CD4-positive, alpha-beta memory T cell (primary cell): ENCODE measurements at regions of chr1 and their contacts with region 1.

Region 1: GRCh38 chr1:202713110-202713509 is 2.9 kb upstream of the SYT2 start:
- DNase-seq: no peak
- H3K4me3 ChIP-seq: no peak overlapping the region
- H3K4me3 Mint-ChIP-seq: no peak overlapping the region
- H3K27ac ChIP-seq: no peak overlapping the region
- H3K27ac Mint-ChIP-seq: peak overlapping the region in 1 of 7 donors; percentile 12
- H3K4me1 ChIP-seq: no peaks in the 10 kb centered on the region
- H3K4me1 Mint-ChIP-seq: peaks cover 0 to 5% (median 0%) of the 10 kb centered on the region in 4 donors
- H3K27me3 ChIP-seq: peaks cover 27% of the 10 kb centered on the region
- H3K27me3 Mint-ChIP-seq: peaks cover 32 to 37% of the 10 kb centered on the region in 2 donors

Region 2: GRCh38 chr1:202184750-202185460 is 528.2 kb before region 1 on chr1:
- CTCF ChIA-PET with region 1: interaction called, 25 read pairs
- POLR2A ChIA-PET with region 1: no interaction called
- intact Hi-C with region 1: no loop called
- DNase-seq: peak; percentile 43 to 56 (median 50)
- H3K4me3 ChIP-seq: no peak overlapping the region
- H3K4me3 Mint-ChIP-seq: no peak overlapping the region
- H3K27ac ChIP-seq: no peak overlapping the region
- H3K27ac Mint-ChIP-seq: peak overlapping the region in 1 of 7 donors; percentile 29
- H3K4me1 ChIP-seq: peaks cover 5% of the 10 kb centered on the region
- H3K4me1 Mint-ChIP-seq: peaks cover 9 to 16% (median 13%) of the 10 kb centered on the region in 4 donors
- H3K27me3 ChIP-seq: no peaks in the 10 kb centered on the region
- H3K27me3 Mint-ChIP-seq: peaks cover 4 to 6% of the 10 kb centered on the region in 2 donors

Region 3: GRCh38 chr1:202462342-202463076 is 250.6 kb before region 1 on chr1:
- CTCF ChIA-PET with region 1: interaction called, 31 read pairs
- POLR2A ChIA-PET with region 1: no interaction called
- intact Hi-C with region 1: no loop called
- DNase-seq: no peak
- H3K4me3 ChIP-seq: no peak overlapping the region
- H3K4me3 Mint-ChIP-seq: no peak overlapping the region
- H3K27ac ChIP-seq: no peak overlapping the region
- H3K27ac Mint-ChIP-seq: peak overlapping the region in 3 of 7 donors; percentile 13 to 68 (median 14)
- H3K4me1 ChIP-seq: no peaks in the 10 kb centered on the region
- H3K4me1 Mint-ChIP-seq: no peaks in the 10 kb centered on the region
- H3K27me3 ChIP-seq: no peaks in the 10 kb centered on the region
- H3K27me3 Mint-ChIP-seq: no peaks in the 10 kb centered on the region

Region 4: GRCh38 chr1:202516434-202516877 is 196.7 kb before region 1 on chr1:
- CTCF ChIA-PET with region 1: no interaction called
- POLR2A ChIA-PET with region 1: no interaction called
- intact Hi-C with region 1: no loop called
- DNase-seq: no peak
- H3K4me3 ChIP-seq: no peak overlapping the region
- H3K4me3 Mint-ChIP-seq: no peak overlapping the region
- H3K27ac ChIP-seq: no peak overlapping the region
- H3K27ac Mint-ChIP-seq: no peak overlapping the region
- H3K4me1 ChIP-seq: no peaks in the 10 kb centered on the region
- H3K4me1 Mint-ChIP-seq: no peaks in the 10 kb centered on the region
- H3K27me3 ChIP-seq: no peaks in the 10 kb centered on the region
- H3K27me3 Mint-ChIP-seq: no peaks in the 10 kb centered on the region

Region 5: DNA sequence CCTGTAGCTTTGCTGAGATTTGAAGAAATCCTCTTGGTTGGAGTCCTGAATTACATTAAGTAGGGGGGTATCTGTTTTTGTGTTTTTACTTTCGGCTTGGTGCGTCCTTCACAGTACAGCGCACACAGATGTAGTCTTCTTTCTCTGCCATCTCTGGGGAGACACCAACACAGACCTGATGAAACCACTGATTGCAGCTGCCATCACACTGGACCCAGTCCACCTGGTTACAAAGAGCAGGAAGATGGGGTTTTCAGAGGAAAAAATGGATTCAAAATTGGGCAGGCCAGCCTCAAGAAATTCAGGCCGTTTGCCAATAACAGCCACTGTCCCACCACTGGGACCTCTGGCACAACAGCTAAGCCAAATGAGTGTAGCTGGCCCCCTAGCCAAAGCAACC is 15.8 kb after region 1 on chr1:
- CTCF ChIA-PET with region 1: interaction called, 13 read pairs
- POLR2A ChIA-PET with region 1: no interaction called
- intact Hi-C with region 1: no loop called
- DNase-seq: no peak
- H3K4me3 ChIP-seq: no peak overlapping the region
- H3K4me3 Mint-ChIP-seq: no peak overlapping the region
- H3K27ac ChIP-seq: no peak overlapping the region
- H3K27ac Mint-ChIP-seq: no peak overlapping the region
- H3K4me1 ChIP-seq: no peaks in the 10 kb centered on the region
- H3K4me1 Mint-ChIP-seq: no peaks in the 10 kb centered on the region
- H3K27me3 ChIP-seq: no peaks in the 10 kb centered on the region
- H3K27me3 Mint-ChIP-seq: no peaks in the 10 kb centered on the region